ENCODE measurements at regions of chr10 and their contacts with region 1.

Region 1: DNA sequence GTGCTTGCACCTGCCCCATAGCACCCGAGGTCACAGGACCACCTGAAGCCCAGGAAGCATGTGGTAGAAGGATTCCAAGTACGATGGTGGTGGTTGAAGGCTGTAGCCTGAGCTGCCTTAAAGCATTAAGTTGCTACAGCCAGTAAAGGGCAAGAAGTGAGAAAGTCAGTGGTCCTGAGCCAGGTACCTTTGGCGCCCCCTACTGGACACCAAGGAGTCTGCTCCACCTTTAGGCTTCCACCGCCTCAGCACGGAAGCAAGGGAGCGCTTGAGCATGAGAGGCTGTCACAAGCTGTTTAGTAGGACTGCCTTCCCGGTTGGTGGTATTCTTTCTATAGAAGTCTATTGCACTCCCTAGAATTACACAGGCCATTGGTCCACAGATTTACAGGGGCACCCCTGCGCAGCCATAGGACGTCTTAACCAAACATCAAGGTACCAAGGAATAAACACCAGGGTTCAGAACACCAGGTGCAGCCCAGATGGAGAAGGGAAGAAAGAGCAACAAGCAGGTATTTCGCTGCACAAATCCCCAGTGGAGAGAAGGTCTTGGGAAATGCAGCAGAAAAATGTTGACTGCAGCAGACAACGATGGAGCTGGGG is 2.2 kb downstream of the CRTAC1 start:
- DNase-seq: no peak
- ATAC-seq: peak in 3 of 4 donors; percentile 37 to 48 (median 46)
- H3K4me3 ChIP-seq: no peak overlapping the region
- H3K27ac ChIP-seq: no peak overlapping the region
- H3K4me1 ChIP-seq: peaks cover 4% of the 10 kb centered on the region
- H3K27me3 ChIP-seq: peaks cover 5 to 59% (median 12%) of the 10 kb centered on the region in 3 donors
- CTCF ChIP-seq: peak; percentile 60

Region 2: GRCh38 chr10:97771055-97771811 is 257.0 kb before region 1 on chr10:
- intact Hi-C with region 1: loop called in 1 of 2 experiments (anchors 10 kb)
- DNase-seq: no peak
- ATAC-seq: peak in 3 of 4 donors; percentile 34 to 63 (median 58)
- H3K4me3 ChIP-seq: peak overlapping the region; percentile 54
- H3K27ac ChIP-seq: no peak overlapping the region
- H3K4me1 ChIP-seq: peaks cover 4% of the 10 kb centered on the region
- H3K27me3 ChIP-seq: peaks cover 0 to 45% (median 16%) of the 10 kb centered on the region in 3 donors
- CTCF ChIP-seq: no peak